ENCODE measurements at regions of chr17 and their contacts with region 1.

Region 1: GRCh38 chr17:43940630-43941029 is 1.6 kb downstream of the PPY start:
- DNase-seq: no peak
- H3K4me3 ChIP-seq: no peak overlapping the region
- H3K27ac ChIP-seq: no peak overlapping the region
- H3K4me1 ChIP-seq: peaks cover 6% of the 10 kb centered on the region
- H3K27me3 ChIP-seq: peaks cover 36% of the 10 kb centered on the region
- CTCF ChIP-seq: peak; percentile 52

Region 2: GRCh38 chr17:43832976-43833829 is 107.4 kb before region 1 on chr17 and contains the start of gene MPP3:
- intact Hi-C with region 1: no loop called
- DNase-seq: peak; percentile 76
- H3K4me3 ChIP-seq: peak within 1 kb of the TSS; percentile 78
- H3K27ac ChIP-seq: peak within 1 kb of the TSS; percentile 93
- H3K4me1 ChIP-seq: peaks cover 53% of the 10 kb centered on the region
- H3K27me3 ChIP-seq: no peaks in the 10 kb centered on the region
- CTCF ChIP-seq: no peak
- total RNA-seq, gene MPP3: 35.2 TPM

Region 3: DNA sequence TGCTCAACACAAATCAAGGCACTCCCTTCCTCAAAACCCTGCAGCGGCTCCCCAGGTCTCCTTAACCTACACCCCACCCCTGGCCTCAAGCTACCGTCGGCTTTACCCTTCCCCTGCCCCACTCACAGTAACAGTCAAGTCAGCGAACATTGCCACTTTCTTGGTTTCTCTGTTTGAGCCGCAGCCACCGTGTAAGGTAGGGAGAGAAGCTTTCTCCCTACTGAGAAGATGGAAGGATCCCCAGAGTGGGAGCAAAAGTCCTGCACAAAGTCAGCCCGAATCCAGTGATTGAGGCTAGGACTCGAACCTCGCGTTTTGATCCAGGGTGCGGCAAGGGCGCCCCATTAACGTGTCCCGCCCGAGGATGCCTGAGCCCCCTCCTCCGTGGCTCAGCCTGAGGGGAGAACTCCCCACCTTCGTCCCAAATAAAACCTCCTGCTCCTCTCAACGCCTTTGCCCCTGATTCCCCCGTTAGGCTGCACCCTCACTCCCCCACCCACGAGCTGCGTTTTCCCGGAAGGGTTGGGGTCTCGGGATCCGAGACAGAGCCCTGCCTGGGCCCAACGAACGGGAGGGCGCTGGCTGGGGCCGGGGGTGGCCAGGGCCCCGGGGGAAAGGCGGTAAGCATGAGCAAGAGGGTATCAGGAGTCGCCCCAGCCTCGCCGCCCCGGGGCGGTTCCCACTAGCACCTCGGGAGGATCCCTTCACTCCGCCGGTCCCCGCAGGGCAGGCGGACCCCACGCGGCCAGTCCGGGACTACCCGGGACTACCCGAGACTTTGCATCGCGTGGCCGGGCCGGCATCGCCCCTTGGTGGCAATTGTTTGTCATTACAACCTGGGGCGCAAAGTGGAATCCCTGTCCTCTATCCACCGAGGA is 53.9 kb after region 1 on chr17:
- intact Hi-C with region 1: loop called (anchors 10 kb)
- DNase-seq: peak; percentile 54
- H3K4me3 ChIP-seq: peak overlapping the region; percentile 51
- H3K27ac ChIP-seq: no peak overlapping the region
- H3K4me1 ChIP-seq: peaks cover 8% of the 10 kb centered on the region
- H3K27me3 ChIP-seq: peaks cover 5% of the 10 kb centered on the region
- CTCF ChIP-seq: peak; percentile 89